ENCODE measurements at regions of chr12 and their contacts with region 1.

Region 1: GRCh38 chr12:5556039-5556614 is 124.2 kb downstream of the NTF3 start:
- DNase-seq: peak in 1 of 2 experiments; percentile 67
- H3K4me3 ChIP-seq: no peak overlapping the region
- H3K4me3 Mint-ChIP-seq: no peak overlapping the region
- H3K27ac Mint-ChIP-seq: no peak overlapping the region
- H3K4me1 ChIP-seq: no peaks in the 10 kb centered on the region
- H3K4me1 Mint-ChIP-seq: peaks cover 6% of the 10 kb centered on the region
- H3K27me3 ChIP-seq: no peaks in the 10 kb centered on the region
- H3K27me3 Mint-ChIP-seq: no peaks in the 10 kb centered on the region
- CTCF ChIP-seq: peak; percentile 31 to 82

Region 2: DNA sequence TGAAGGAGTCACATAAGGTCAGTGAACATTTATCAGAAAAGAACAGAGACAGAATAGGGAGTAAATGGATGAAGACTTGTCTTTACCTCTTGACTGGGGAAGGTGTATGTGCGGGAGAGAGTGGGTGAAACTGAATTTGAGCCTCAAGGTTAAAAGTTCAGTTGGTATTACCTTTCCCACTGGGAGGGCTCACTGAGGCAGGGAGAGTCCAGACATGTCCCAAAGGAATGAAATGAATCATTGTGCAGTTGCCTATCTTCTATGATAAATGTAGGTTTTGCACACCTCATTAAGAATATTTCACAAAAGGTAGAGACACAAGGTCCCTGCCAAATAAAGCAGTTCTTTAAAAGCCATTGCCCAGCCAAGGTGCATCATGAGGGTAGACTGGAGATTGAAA is 407.2 kb before region 1 on chr12:
- CTCF ChIA-PET with region 1: no interaction called
- POLR2A ChIA-PET with region 1: no interaction called
- intact Hi-C with region 1: no loop called
- DNase-seq: no peak
- H3K4me3 ChIP-seq: no peak overlapping the region
- H3K4me3 Mint-ChIP-seq: no peak overlapping the region
- H3K27ac Mint-ChIP-seq: no peak overlapping the region
- H3K4me1 ChIP-seq: no peaks in the 10 kb centered on the region
- H3K4me1 Mint-ChIP-seq: no peaks in the 10 kb centered on the region
- H3K27me3 ChIP-seq: no peaks in the 10 kb centered on the region
- H3K27me3 Mint-ChIP-seq: peaks cover 53% of the 10 kb centered on the region
- CTCF ChIP-seq: no peak

Region 3: DNA sequence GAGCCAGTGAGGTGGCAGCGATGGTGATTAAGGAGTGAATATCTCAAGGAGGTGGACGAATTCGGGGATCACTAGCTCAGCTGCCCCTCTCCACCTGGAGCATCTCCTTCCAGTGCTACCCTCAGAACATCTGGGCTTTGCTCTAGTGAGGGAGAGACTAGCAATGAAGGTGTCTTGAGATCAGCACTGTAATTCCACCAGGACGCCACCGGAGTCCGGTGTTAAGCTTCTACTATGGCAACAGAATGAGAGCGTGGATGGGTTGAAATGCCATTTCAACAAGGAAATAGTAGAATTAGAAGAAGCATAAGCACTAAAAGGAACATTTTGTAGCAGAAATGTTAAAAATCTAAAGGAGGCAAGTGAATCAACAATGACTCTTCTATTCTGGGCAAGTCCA is 63.1 kb before region 1 on chr12:
- CTCF ChIA-PET with region 1: no interaction called
- POLR2A ChIA-PET with region 1: no interaction called
- intact Hi-C with region 1: loop called (anchors 1 kb)
- DNase-seq: peak; percentile 68 to 70
- H3K4me3 ChIP-seq: no peak overlapping the region
- H3K4me3 Mint-ChIP-seq: no peak overlapping the region
- H3K27ac Mint-ChIP-seq: peak overlapping the region; percentile 18
- H3K4me1 ChIP-seq: peaks cover 25% of the 10 kb centered on the region
- H3K4me1 Mint-ChIP-seq: peaks cover 24% of the 10 kb centered on the region
- H3K27me3 ChIP-seq: no peaks in the 10 kb centered on the region
- H3K27me3 Mint-ChIP-seq: no peaks in the 10 kb centered on the region
- CTCF ChIP-seq: peak; percentile 60 to 66

Measured in Caco-2 (cell line).